ENCODE measurements at regions of chr19 and their contacts with region 1.

Region 1: DNA sequence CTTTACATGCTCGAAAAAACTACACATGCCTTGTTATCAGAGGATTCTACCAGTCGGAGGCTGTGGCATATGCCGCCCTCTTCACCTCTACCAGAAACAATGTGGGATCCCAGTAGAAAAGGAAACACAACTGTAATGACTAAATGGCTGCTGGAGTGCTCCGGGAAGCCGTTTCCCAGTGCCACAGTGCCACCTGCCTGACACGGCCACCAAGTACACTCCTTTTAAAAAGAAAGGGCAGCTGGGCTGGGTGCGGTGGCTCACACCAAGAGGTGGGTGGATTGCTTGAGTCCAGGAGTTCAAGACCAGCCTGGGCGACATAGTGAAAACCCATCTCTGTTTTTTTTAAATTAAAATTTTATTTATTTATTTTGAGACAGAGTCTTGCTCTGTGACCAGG is 67.3 kb downstream of the TRPM4 start:
- DNase-seq: no peak
- H3K4me3 ChIP-seq: no peak overlapping the region
- H3K27ac ChIP-seq: no peak overlapping the region
- H3K27me3 ChIP-seq: peaks cover 2% of the 10 kb centered on the region
- CTCF ChIP-seq: peak; percentile 43

Region 2: GRCh38 chr19:49243129-49243528 is 18.3 kb after region 1 on chr19:
- CTCF ChIA-PET with region 1: interaction called, 20 read pairs
- POLR2A ChIA-PET with region 1: no interaction called
- DNase-seq: no peak
- H3K4me3 ChIP-seq: no peak overlapping the region
- H3K27ac ChIP-seq: no peak overlapping the region
- H3K27me3 ChIP-seq: peaks cover 11% of the 10 kb centered on the region
- CTCF ChIP-seq: no peak

Region 3: GRCh38 chr19:49301165-49301865 is 76.5 kb after region 1 on chr19:
- CTCF ChIA-PET with region 1: interaction called, 11 read pairs
- POLR2A ChIA-PET with region 1: no interaction called
- DNase-seq: no peak
- H3K4me3 ChIP-seq: peak overlapping the region; percentile 13; the same call in 1 of the 2 replicates
- H3K27ac ChIP-seq: no peak overlapping the region
- H3K27me3 ChIP-seq: no peaks in the 10 kb centered on the region
- CTCF ChIP-seq: peak; percentile 81

Region 4: DNA sequence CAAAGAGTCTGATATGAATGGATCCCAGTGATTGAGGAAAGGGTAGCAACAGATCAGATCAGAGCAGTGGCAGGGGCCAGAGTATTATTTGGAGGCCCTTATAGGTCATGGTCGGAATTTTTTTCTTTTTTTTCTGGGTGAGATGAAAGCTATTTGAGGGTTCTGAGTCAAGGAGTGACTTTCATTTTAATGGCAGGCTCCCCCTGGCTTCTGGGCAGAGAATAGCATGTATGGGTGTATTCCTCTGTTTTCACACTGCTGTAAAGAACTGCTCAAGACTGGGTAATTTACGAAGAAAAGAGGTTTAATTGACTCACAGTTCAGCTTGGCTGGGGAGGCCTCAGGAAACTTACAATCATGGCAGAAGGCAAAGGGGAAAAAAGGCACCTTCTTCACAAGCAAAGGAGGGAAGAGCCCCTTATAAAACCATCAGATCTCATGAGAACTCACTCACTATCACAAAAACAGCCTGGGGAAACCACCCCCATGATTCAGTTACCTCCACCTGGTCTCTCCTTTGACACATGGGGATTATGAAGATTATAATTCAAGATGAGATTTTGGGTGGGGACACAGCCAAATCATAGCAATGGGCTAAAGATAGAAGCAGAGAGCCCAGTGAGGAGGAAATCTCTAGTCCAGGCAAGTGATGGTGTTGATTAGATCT is 103.2 kb after region 1 on chr19:
- CTCF ChIA-PET with region 1: interaction called, 12 read pairs
- POLR2A ChIA-PET with region 1: no interaction called
- DNase-seq: no peak
- H3K4me3 ChIP-seq: no peak overlapping the region
- H3K27ac ChIP-seq: no peak overlapping the region
- H3K27me3 ChIP-seq: no peaks in the 10 kb centered on the region
- CTCF ChIP-seq: peak; percentile 68

Measured in AG04450 (cell line).